ENCODE measurements at regions of chr12 and their contacts with region 1.

Region 1: DNA sequence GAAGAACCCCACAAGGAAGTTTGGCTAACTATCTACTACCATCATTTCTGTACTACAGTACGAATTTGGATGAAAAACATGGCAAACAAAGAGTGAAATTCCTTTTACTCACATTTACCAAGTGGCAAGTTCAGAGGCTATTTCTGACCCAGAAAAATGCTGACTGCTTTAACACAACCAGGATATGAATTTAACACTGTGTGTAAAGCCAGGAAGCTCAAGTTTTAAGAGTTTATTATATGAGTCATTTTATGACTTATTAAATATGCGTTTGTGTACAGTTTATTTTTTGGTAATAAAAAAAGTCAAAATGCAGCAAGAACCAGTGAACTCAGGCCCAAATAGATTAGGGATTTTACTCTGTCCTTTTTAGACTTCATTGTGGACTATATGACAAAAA is 58.4 kb upstream of the STAC3 start:
- DNase-seq: peak; percentile 9
- H3K4me3 ChIP-seq: no peak overlapping the region
- CTCF ChIP-seq: no peak

Region 2: DNA sequence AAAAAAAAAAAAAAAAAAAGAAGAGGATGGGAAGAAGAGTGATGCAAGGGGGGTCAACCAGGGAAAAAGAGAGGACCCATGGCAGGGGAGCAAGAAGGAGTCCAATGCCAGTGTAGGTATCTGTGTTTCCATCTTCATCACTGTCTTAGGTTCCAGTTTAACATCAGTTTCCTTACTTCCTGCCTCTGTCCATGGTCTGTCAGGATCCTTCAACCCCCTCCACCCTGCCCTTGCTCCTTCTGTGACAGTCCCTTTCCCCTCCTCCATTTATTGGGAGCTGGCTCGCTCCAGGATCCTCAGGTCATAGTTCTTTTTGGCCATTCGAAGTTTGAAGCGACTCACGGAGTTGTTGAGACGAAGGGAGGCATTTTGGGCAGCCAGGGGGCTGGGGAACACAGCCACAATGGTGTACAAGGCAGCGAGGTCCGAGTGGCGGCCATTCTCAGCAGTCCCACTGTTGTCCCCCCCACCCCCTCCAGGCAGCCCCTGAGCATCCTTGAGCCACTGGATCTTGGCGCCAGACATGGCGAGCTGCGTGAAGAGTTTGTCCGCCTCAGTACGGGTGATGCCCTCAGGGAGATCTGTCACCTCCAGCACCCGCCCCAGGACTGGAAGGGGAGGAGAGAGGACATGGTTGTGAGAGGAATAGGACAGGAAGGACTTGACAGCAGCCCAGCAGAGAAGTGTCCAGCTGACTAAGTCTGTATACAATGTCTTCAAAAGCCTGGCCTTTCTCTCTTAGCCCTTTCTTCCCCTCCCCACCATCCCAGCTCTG is 54.7 kb before region 1 on chr12:
- CTCF ChIA-PET with region 1: no interaction called
- POLR2A ChIA-PET with region 1: no interaction called
- DNase-seq: no peak
- H3K4me3 ChIP-seq: no peak overlapping the region
- CTCF ChIP-seq: no peak

Region 3: GRCh38 chr12:57280211-57281062 is 29.0 kb before region 1 on chr12:
- CTCF ChIA-PET with region 1: interaction called, 17 read pairs
- POLR2A ChIA-PET with region 1: no interaction called
- DNase-seq: peak; percentile 79
- H3K4me3 ChIP-seq: no peak overlapping the region
- CTCF ChIP-seq: no peak

Region 4: DNA sequence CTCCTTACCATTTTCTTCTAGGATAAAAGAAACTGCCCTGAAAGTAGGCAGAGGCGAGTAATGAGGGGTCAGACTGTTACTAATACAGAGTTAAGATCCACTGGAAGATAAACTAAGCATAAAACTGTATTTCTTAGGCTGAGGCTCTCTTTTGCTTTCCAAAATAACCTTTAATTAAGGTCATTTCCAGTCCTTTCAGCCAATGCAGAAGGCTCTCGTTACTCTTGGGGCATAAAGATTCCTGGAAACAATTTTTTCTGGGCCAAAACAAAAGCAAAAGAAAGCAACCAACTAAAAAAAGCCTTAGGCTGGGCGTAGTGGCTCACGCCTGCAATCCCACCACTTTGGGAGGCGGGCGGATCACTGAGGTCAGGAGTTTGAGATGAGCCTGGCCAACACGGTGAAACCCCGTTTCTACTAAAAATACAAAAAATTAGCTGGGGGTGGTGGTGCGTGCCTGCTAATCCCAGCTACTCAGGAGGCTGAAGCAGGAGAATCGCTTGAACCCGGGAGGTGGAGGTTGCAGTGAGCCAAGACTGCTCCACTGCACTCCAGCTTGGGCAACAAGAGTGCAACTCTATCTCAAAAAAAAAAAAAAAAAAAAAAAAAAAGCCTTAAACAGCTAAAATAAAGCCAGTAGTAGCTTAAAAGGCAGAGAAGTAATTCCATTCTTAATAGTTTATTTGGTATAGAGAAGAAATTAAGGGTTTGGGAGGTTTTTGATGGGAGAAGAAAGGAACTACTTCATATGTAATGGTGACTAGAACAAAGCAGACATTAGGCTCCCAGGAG is 10.5 kb after region 1 on chr12:
- CTCF ChIA-PET with region 1: interaction called, 51 read pairs
- POLR2A ChIA-PET with region 1: no interaction called
- DNase-seq: no peak
- H3K4me3 ChIP-seq: no peak overlapping the region
- CTCF ChIP-seq: no peak

Region 5: GRCh38 chr12:57368349-57369095 is 59.1 kb after region 1 on chr12:
- CTCF ChIA-PET with region 1: interaction called, 11 read pairs
- POLR2A ChIA-PET with region 1: no interaction called
- DNase-seq: no peak
- H3K4me3 ChIP-seq: no peak overlapping the region
- CTCF ChIP-seq: no peak